ENCODE measurements at regions of chr12 and their contacts with region 1.

Region 1: GRCh38 chr12:44616385-44616784 is 259.7 kb downstream of the NELL2 start:
- DNase-seq: no peak
- ATAC-seq: no peak
- H3K4me3 ChIP-seq: no peak overlapping the region
- H3K27ac ChIP-seq: no peak overlapping the region
- H3K4me1 ChIP-seq: no peaks in the 10 kb centered on the region
- H3K27me3 ChIP-seq: peaks cover 0 to 7% (median 0%) of the 10 kb centered on the region in 3 donors
- CTCF ChIP-seq: no peak

Region 2: DNA sequence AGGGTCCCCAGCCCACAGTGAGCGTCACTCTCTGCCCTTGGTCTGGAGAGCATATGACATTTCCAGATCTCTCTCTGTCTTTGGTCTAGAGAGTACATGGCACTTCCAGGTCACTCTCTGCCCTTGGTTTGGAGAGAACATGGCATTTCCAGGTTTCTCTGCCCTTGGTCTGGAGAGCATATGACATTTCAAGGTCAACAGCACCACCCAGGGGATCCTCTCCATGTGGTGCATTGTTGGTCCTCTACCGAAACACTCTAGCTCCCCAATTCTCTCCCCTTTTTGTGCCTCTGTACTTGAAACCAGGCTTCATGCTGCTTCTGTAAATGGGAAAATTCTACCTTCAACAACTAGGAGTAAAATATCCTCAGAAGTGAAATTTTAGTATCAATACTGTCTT is 139.7 kb before region 1 on chr12:
- intact Hi-C with region 1: no loop called
- DNase-seq: no peak
- ATAC-seq: no peak
- H3K4me3 ChIP-seq: no peak overlapping the region
- H3K27ac ChIP-seq: no peak overlapping the region
- H3K4me1 ChIP-seq: no peaks in the 10 kb centered on the region
- H3K27me3 ChIP-seq: no peaks in the 10 kb centered on the region
- CTCF ChIP-seq: no peak

Region 3: DNA sequence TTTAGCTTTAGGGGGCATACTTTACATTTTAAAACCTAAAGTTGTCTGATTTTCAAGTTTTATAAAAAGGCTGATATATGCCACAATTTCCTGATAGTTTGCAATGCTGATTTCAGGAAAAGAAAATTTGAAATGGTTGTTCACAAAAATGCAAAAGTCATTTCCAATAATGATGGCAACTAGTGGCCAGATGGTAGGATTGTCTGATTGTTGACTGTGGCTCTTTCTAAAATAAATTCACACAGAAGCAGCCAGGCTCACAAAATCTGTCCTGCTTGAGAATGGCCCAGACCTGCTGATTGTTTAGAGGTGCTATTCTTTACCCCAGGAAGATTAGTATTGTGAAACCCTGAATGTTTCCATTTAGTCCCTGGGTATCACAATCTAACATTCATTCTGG is 39.5 kb after region 1 on chr12:
- intact Hi-C with region 1: loop called in 1 of 2 experiments (anchors 2 kb)
- DNase-seq: no peak
- ATAC-seq: no peak
- H3K4me3 ChIP-seq: no peak overlapping the region
- H3K27ac ChIP-seq: no peak overlapping the region
- H3K4me1 ChIP-seq: no peaks in the 10 kb centered on the region
- H3K27me3 ChIP-seq: no peaks in the 10 kb centered on the region
- CTCF ChIP-seq: no peak

Region 4: DNA sequence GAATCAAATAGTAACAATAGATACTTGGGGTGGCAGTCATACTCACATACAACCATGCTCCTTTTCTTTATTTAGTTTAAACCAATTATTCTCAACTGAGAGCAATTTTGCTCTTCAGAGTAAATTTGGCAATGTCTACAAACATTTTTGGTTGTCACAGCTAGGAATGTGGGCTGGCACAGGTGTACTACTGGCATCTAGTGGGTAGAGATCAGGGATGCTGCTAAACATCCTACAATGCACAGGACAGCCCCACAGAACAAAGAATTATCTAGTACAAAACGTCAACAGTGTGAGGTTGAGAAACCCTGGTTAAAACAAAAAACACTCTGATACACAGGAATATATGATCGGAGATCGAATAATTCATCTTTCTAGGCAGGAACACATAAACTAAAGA is 73.2 kb after region 1 on chr12:
- intact Hi-C with region 1: no loop called
- DNase-seq: no peak
- ATAC-seq: no peak
- H3K4me3 ChIP-seq: no peak overlapping the region
- H3K27ac ChIP-seq: no peak overlapping the region
- H3K4me1 ChIP-seq: no peaks in the 10 kb centered on the region
- H3K27me3 ChIP-seq: no peaks in the 10 kb centered on the region
- CTCF ChIP-seq: no peak

Measured in psoas muscle (tissue), 8 donors.